ENCODE measurements at regions of chr2 and their contacts with region 1.

Region 1: DNA sequence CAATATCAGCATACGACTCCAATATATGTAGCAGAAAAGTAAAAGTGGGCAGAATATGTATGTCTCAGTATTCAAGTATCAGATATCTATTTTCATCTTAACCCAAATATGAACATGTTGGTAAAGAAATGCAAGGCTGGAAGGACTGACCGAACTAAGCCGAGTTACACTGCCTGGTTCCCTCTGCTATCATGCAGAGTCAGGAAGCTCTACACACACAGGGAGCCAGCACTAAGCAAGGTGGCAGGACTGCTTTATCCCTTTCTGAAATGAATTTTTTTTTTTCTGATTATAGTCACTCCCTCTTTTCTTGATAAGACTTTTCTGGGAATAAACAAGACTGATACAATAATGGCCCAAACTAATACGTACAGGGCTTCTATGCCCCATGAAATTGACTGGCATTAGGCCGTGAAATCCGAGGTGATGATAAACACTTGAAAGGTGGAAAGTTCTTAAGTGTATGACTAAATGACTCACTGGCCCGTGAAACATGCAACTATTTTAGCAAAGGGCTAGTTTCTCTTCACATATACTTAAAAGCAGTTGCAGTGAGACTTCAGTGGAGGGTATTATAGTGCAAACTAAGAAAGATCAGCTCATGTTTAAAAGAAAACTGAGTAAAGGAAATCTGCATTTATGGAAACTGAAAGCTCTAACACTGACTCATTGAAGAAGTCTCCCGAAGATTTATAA is 14.9 kb downstream of the DPP4 start:
- DNase-seq: peak; percentile 25
- H3K4me3 Mint-ChIP-seq: peak overlapping the region; percentile 75
- H3K27ac Mint-ChIP-seq: peak overlapping the region; percentile 96
- H3K4me1 Mint-ChIP-seq: peaks cover 93% of the 10 kb centered on the region
- H3K27me3 Mint-ChIP-seq: no peaks in the 10 kb centered on the region

Region 2: DNA sequence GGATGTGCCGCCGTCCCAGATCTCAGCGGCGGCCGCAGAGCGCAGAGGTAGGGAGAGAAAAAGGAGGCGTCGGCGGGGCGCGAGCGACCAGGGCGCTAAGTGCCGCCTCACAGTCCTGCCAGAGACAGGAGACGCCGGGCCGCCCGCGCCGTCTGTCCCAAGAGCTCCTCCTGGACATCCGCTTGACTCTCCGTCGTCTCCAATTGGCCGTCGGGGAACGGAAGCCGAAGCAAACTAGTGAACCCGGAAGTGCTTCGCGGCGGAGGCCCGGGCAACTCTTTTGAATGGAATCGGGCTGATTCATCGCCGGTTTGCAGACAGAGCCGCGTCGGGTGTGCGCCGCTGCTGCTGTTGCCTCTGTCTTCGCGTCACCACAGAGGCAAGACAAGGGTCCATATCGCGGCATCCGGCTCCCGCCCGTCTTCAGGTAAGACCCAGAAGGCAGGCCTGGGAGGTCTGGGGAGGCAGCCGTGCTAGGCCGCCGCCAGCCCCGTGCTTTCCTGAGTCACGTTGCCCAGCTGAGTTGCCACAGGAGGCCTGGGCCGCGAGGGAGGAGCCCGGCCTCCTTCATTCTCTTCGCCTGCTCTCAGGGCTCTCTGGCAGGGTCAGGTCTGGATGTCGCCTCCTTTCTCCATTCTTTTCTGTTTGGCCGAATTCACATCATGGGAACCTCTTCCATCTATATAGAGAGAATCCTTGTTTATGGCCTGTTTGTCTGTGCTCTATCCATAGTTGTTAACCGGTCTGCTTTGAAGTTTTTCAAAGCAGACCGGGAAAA is 750.8 kb before region 1 on chr2 and contains the start of gene PSMD14:
- intact Hi-C with region 1: loop called (anchors 5 kb)
- DNase-seq: peak; percentile 90
- H3K4me3 Mint-ChIP-seq: peak within 1 kb of the TSS; percentile 91
- H3K27ac Mint-ChIP-seq: peak within 1 kb of the TSS; percentile 94
- H3K4me1 Mint-ChIP-seq: peaks cover 33% of the 10 kb centered on the region
- H3K27me3 Mint-ChIP-seq: peaks cover 5% of the 10 kb centered on the region
- total RNA-seq, gene PSMD14: 103 and 113 TPM in 2 replicates

Region 3: DNA sequence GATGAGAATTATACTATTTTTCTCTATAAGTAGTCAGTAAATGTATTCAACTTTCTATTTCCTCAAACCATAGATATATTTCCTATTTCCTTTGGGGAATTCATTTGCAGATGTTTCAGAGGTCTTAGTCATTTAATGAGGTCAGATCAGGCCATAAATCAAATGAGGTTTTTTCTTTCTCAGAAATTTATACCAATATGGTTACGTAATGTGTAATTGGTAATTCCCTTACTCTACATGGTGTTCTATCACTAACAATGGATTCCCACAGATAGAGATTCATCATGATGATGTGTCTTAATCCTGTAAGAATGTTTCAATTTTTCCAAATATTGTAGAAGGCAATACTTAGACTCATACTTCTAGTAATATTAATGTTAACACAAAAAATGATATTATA is 93.1 kb before region 1 on chr2:
- intact Hi-C with region 1: loop called (anchors 1 kb)
- DNase-seq: no peak
- H3K4me3 Mint-ChIP-seq: no peak overlapping the region
- H3K27ac Mint-ChIP-seq: peak overlapping the region; percentile 1
- H3K4me1 Mint-ChIP-seq: peaks cover 86% of the 10 kb centered on the region
- H3K27me3 Mint-ChIP-seq: no peaks in the 10 kb centered on the region

Region 4: DNA sequence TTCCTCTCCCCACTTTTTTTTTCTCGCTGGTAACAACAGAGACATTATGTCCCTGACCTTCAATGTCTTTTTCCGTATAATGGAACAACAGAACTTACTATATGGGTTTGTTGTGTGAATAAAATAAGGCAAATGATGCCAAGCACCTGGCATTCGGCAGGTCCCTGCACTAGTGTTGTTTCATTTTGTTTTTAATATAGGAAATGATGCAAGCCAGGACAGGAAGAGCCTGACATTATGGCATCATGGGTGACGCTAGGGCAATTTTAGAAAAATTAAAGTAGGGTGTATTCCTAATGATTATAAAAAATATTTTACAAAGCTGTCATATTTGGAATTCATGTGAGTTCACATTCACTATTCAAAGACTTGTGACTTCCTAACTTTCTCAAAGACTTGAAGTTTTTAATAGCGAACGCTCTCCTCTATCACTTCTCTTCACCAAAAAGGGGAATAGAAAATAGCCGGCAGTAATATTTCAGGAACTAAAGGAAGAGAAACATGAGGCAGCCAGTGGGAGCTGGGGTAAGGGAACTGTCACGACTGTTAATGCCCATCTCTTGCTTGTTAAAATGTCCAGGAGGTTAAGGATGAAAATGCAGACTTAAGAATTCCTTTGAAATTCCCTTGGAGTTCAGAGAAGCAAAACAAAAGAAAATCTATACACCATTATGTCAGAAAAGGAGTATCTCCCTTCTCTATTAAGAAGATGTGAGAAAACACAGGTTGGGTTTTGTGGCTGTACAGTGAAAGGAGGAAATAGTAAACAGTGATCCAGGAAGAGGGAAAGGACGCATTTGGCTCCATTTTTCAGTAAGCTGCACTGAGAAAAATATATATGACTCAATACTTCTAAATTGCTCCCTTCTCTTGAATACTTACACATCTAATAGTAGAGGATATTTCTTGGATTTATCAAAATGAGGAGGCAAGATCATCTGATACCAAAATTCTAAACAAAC is 45.3 kb before region 1 on chr2:
- intact Hi-C with region 1: loop called (anchors 1 kb)
- DNase-seq: no peak
- H3K4me3 Mint-ChIP-seq: peak overlapping the region; percentile 81
- H3K27ac Mint-ChIP-seq: peak overlapping the region; percentile 95
- H3K4me1 Mint-ChIP-seq: peaks cover 95% of the 10 kb centered on the region
- H3K27me3 Mint-ChIP-seq: no peaks in the 10 kb centered on the region

Region 5: GRCh38 chr2:162037028-162037795 is 21.9 kb before region 1 on chr2:
- intact Hi-C with region 1: loop called (anchors 1 kb)
- DNase-seq: no peak
- H3K4me3 Mint-ChIP-seq: no peak overlapping the region
- H3K27ac Mint-ChIP-seq: no peak overlapping the region
- H3K4me1 Mint-ChIP-seq: peaks cover 66% of the 10 kb centered on the region
- H3K27me3 Mint-ChIP-seq: no peaks in the 10 kb centered on the region

Region 6: DNA sequence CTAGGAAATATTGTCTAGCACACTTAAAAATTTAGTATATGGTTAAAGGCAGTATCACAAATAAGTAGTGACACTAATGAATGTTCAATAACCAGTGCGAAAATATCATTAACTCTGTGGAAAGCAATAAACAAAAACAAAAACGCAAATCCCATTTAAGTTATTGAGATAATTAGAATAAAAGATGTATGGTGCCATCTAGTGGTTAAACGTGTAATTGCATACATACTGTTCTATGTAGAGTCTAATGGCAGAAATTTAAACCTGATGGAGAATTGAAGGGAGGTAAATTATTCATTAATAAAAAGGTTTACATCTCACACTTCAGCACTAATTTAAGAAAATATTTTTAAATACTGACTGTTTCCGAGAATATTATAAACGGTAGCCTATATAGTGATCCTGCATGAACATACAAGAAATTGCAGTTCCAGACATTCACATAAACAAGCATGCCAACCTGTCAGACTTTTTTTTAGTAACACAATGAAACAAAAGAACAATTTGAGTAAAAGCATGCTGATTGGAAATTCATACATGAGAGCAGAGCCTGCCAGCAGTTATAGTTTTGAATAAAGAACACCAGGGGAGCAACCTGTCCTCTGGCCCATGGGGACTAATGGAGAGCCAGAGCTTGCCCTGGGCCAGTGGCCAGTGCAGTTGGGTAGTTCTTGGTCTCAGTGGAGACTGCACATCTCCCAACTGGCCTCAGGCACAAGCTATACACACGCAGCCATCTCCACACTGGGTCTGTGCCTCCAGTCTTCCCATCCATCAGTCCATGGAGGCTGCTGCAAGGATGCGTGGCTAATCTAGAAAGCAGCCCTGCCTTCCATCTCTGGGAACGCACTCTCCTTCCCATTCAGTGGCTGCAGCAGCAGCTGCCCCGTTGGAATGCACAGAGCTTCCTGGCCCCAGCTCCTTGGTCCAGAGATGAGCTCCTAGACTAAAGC is 65.0 kb after region 1 on chr2:
- intact Hi-C with region 1: loop called (anchors 2 kb)
- DNase-seq: no peak
- H3K4me3 Mint-ChIP-seq: no peak overlapping the region
- H3K27ac Mint-ChIP-seq: no peak overlapping the region
- H3K4me1 Mint-ChIP-seq: peaks cover 21% of the 10 kb centered on the region
- H3K27me3 Mint-ChIP-seq: no peaks in the 10 kb centered on the region